ENCODE measurements at regions of chr4 and their contacts with region 1.

Region 1: DNA sequence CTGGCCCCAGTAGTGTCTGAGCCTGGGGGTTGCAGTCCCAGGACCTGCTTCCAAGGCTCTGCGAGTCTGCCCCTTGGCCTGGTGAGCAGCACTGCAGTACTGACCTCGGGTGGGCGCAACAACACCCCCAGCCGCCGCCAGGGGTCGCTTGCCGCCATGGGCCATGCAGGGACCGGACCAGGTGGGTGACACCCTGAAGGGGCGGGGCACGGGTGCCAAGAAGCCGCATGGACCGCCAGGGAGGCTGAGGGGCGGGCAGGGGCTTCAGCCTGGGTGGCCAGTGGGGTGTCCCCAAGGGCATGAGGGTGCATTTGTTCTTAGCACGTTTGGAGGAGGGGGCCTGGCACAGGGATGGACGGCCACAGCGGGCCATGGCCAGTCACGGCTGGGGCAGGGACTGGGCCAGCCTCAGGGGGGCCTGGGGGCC is 25.0 kb downstream of the TACC3 start:
- DNase-seq: peak; percentile 75 to 82 (median 80)
- ATAC-seq: peak; percentile 71
- H3K4me3 ChIP-seq: no peak overlapping the region
- H3K4me1 ChIP-seq: peaks cover 3% of the 10 kb centered on the region
- CTCF ChIP-seq: peak; percentile 71

Region 2: GRCh38 chr4:1899149-1900086 is 153.1 kb after region 1 on chr4:
- intact Hi-C with region 1: loop called in 1 of 2 experiments (anchors 10 kb)
- DNase-seq: peak; percentile 68 to 82 (median 74)
- ATAC-seq: peak; percentile 95
- H3K4me3 ChIP-seq: no peak overlapping the region
- H3K4me1 ChIP-seq: peaks cover 4% of the 10 kb centered on the region
- CTCF ChIP-seq: peak; percentile 52